Breast epithelium (tissue), 4 donors: ENCODE measurements at regions of chr4 and their contacts with region 1.

Region 1: DNA sequence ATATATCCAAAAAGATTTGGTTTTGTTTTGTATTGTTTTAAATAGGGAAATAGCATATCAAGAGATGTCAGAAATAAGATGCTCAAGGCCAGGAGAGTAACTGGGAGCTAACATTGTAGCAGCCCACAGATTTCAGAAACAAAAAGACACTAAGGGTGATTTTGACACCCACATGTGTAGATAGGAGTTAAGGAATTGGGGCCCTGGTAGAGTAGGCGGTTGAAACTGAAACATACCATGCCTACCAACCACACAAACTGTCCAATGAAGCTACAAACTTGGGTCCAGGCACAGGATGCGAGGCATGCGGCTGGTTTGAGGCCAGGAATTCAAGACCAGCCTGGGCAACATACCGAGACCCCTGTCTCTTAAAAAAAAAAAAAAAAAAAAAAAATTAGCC is 6.3 kb upstream of the HSPA4L start:
- DNase-seq: no peak
- H3K4me3 ChIP-seq: no peak overlapping the region
- H3K27ac ChIP-seq: no peak overlapping the region
- H3K4me1 ChIP-seq: no peaks in the 10 kb centered on the region
- H3K27me3 ChIP-seq: no peaks in the 10 kb centered on the region
- CTCF ChIP-seq: no peak
- POLR2A ChIP-seq: no peak

Region 2: GRCh38 chr4:127708985-127709384 is 66.9 kb before region 1 on chr4:
- intact Hi-C with region 1: loop called (anchors 2 kb)
- DNase-seq: peak in 1 of 2 donors; percentile 49
- H3K4me3 ChIP-seq: peak overlapping the region in 1 of 3 donors; percentile 23
- H3K27ac ChIP-seq: peak overlapping the region; percentile 44 to 61
- H3K4me1 ChIP-seq: no peaks in the 10 kb centered on the region
- H3K27me3 ChIP-seq: no peaks in the 10 kb centered on the region
- CTCF ChIP-seq: no peak
- POLR2A ChIP-seq: no peak